Tibial artery (tissue), 4 donors: ENCODE measurements at regions of chr10 and their contacts with region 1.

Region 1: GRCh38 chr10:69403519-69403918 is 13.2 kb downstream of the TACR2 start:
- DNase-seq: no peak
- H3K4me3 ChIP-seq: no peak overlapping the region
- H3K27ac ChIP-seq: peak overlapping the region in 1 of 2 donors; percentile 21
- H3K4me1 ChIP-seq: peaks cover 7 to 38% (median 31%) of the 10 kb centered on the region in 4 donors
- H3K27me3 ChIP-seq: no peaks in the 10 kb centered on the region
- CTCF ChIP-seq: no peak

Region 2: DNA sequence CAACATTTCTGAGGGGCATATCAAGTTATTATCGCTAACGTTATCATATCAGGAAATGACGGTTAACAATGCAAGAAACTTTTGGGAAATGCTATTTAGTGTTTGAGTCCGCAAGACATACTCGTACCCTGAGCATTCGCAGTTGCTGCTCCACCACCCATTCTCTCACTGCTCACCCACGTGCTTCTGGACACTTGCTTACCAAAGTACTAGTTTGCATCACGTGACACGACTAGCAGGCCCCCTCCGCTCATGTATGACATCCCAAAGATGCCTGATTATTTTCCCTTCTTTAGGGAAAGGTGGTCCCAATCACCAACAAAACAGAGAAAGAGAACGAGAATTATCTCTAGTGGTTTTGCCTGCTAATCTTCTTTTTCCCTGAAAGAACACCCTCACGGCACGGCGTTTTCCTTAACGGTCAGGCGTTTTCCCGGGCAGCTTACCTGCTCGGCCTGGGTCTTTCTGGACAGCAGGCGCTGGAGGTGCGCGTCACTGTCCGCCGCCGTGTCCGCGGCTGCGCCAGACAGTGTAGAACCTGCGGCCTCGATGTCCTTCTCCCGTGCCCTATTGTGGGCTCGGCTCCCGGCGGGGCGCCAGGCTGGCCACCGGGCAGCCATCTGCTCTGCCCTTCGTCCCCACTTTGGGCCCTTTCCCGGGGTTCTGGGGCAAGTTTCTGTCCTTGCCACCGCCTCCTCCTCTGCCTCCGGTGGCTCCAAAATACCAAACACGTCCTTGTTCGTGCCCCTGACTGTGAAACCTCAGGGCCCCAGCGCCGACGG is 223.6 kb before region 1 on chr10 and contains the start of gene SUPV3L1:
- intact Hi-C with region 1: loop called (anchors 5 kb)
- DNase-seq: peak; percentile 95 to 96
- H3K4me3 ChIP-seq: peak within 1 kb of the TSS; percentile 92 to 97
- H3K27ac ChIP-seq: peak within 1 kb of the TSS; percentile 86 to 95
- H3K4me1 ChIP-seq: peaks cover 0 to 33% (median 24%) of the 10 kb centered on the region in 4 donors
- H3K27me3 ChIP-seq: no peaks in the 10 kb centered on the region
- CTCF ChIP-seq: peak in 1 of 2 experiments; percentile 26